HAP-1 (cell line): ENCODE measurements at regions of chr17 and their contacts with region 1.

Region 1: GRCh38 chr17:14300575-14301278 is at the start of gene HS3ST3B1:
- DNase-seq: peak; percentile 84 to 95
- H3K4me3 ChIP-seq: peak within 1 kb of the TSS; percentile 25
- H3K4me1 ChIP-seq: no peaks in the 10 kb centered on the region
- H3K27me3 ChIP-seq: peaks cover 72% of the 10 kb centered on the region

Region 2: DNA sequence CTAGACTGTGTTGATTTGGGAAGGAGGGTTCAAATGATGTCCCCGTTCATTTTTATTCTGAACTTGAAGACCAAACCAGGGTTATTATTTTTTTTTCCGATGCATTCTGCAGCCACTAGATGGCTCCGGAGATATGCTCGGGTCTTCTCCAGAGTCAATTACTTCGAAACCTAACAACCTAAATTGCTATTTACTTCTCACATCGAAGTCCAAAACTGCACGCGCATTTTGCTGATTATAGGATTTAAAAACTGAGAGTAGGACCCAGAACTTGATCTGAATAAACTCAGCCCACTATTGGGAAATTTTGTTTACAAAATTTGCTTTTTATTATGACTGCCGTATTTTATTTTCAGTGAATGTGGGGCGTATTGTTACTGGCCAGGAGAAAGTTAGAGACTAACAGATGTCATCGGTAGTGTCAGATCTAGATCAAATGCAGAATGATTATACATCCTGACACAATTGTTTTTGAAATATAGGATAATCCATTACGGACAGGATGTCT is 962.8 kb before region 1 on chr17:
- in situ Hi-C with region 1: loop called (anchors 25 kb)
- DNase-seq: peak; percentile 8 to 10
- H3K4me3 ChIP-seq: no peak overlapping the region
- H3K4me1 ChIP-seq: no peaks in the 10 kb centered on the region
- H3K27me3 ChIP-seq: no peaks in the 10 kb centered on the region

Region 3: DNA sequence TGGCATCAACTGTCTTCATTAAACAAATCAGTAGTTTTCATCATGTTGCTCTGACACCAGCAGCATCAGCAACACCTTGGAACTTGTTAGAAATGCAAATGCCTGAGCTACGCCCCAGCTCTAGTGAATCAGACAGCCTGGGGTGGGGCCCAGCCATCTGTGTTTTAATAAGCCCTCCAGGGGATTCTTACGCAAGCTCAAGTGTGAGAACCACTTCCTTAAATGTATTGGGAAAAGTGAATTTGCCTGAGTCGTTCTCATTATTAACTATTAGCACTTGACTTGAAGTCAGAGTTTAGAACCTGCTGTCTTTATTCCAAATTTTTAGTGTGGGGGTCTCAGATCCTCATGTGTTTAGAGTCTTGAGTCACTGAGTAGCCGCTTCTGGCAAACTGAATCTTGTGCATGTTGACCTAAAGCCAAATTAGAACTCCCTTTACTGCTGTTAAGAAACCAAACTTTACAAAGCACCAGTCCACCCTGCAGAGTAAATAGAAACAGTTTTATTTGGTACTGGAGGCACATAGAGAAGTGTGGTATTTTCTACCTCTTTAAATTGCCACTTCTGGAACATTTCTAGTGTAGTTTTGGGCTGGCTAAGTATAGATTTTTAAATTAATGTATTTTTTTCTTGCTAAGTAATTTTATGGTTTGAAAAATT is 368.8 kb before region 1 on chr17:
- in situ Hi-C with region 1: loop called (anchors 25 kb)
- DNase-seq: no peak
- H3K4me3 ChIP-seq: no peak overlapping the region
- H3K4me1 ChIP-seq: no peaks in the 10 kb centered on the region
- H3K27me3 ChIP-seq: no peaks in the 10 kb centered on the region

Region 4: DNA sequence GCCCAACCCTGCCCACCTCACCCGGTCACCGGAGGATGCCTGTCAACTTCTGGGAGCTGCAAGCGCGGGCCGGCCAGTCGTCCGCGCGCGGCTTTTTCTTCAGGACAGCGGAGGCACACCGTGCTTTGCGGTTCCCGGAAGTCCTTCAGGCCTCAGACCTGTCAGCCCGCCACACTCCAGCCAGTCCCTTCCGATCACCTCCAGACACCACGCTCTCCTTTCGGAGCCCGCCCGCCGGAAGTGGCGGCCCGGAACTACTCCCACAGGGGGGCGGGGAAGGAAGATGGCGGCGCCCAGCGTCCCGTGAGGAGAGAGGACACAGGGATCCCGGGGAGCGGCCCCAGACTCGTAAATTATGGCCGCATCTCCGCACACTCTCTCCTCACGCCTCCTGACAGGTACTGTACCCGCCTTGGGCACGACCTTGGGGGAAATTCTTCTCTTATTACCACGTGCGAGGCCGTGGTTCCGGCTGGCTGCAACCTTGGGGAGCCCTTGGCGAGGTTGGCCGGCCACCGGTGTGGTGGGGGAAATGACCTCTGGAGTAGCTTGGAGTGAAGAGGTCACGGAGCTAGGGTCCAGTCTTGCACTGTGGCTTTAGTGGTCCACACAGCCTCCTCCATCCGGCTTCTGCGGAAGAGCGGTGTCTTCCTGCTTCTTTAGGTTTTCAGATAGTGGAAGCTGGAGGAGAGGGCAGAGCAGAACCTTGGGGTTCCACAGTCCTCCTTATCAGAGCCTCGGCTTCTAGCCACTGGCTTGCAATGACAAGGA is 231.3 kb before region 1 on chr17 and contains the start of gene COX10:
- in situ Hi-C with region 1: no loop called
- DNase-seq: peak; percentile 80 to 94
- H3K4me3 ChIP-seq: peak within 1 kb of the TSS; percentile 98
- H3K4me1 ChIP-seq: peaks cover 8% of the 10 kb centered on the region
- H3K27me3 ChIP-seq: no peaks in the 10 kb centered on the region

Region 5: GRCh38 chr17:14211801-14212200 is 88.9 kb before region 1 on chr17:
- in situ Hi-C with region 1: loop called (anchors 25 kb)
- DNase-seq: peak in 1 of 2 experiments; percentile 13
- H3K4me3 ChIP-seq: no peak overlapping the region
- H3K4me1 ChIP-seq: no peaks in the 10 kb centered on the region
- H3K27me3 ChIP-seq: no peaks in the 10 kb centered on the region

Region 6: GRCh38 chr17:14417336-14417735 is 116.6 kb after region 1 on chr17:
- in situ Hi-C with region 1: loop called (anchors 25 kb)
- DNase-seq: no peak
- H3K4me3 ChIP-seq: no peak overlapping the region
- H3K4me1 ChIP-seq: no peaks in the 10 kb centered on the region
- H3K27me3 ChIP-seq: no peaks in the 10 kb centered on the region